ENCODE measurements at regions of chr4 and their contacts with region 1.

Region 1: GRCh38 chr4:10164877-10165283 is 48.3 kb upstream of the WDR1 start:
- DNase-seq: peak in 7 of 10 donors; percentile 41 to 88 (median 51)

Region 2: GRCh38 chr4:9835430-9835829 is 329.4 kb before region 1 on chr4:
- intact Hi-C with region 1: no loop called
- DNase-seq: no peak

Region 3: GRCh38 chr4:10403633-10404445 is 239.0 kb after region 1 on chr4:
- intact Hi-C with region 1: loop called (anchors 2 kb)
- DNase-seq: peak in 1 of 10 donors; percentile 21

Region 4: DNA sequence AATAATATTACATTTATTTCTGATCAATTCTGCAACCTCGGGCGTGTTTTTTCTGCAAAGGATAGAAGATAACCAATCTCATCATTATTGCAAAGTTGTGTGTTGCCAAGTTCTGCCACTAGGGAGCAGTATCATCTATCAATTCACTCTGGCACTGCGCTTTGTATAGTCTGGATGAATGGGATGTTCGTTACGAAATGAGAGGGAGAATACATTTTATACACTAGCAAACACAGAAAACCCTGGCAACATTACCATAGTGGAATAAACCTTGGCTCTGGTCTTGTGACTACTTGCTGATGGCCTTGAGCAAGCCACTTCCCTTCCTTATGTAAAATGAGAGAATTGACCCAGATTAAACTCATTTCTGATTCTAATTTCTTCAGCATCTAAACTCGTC is 389.8 kb after region 1 on chr4:
- intact Hi-C with region 1: loop called (anchors 2 kb)
- DNase-seq: peak in 4 of 10 donors; percentile 43 to 53 (median 47)

Measured in posterior cingulate gyrus (tissue), 11 donors.